ENCODE measurements at regions of chr5 and their contacts with region 1.

Region 1: DNA sequence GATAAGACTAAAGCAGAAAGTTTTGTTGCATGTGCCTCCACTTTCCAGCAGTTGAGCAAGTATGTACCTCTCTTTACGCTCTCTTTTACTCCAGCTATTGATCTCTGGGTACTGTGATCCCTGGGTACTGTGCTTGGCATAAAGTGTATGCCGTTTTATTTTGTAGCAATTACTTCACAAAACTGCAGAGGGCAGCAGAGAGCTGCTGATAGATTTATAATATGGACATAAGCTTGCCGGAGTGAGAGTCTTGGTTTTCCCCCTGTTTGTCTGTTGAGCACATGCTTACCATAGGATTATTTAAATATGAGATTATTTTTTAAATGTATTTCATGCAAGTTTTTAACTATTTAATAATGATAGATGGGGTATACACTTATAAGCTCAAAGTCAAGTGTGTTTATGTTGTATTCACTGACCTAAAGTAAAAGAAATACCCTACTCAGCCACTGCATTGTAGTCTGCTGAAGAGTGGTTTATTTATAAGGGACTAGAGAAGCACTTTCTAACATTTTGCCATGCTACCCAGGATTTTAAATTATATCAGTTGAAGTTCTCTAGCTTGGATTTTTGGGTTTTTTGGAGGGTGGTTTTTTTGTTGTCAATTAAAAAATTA is 13.0 kb downstream of the TTC1 start:
- DNase-seq: peak; percentile 89
- H3K4me3 Mint-ChIP-seq: no peak overlapping the region
- H3K27ac Mint-ChIP-seq: no peak overlapping the region
- H3K4me1 Mint-ChIP-seq: peaks cover 15% of the 10 kb centered on the region
- H3K27me3 Mint-ChIP-seq: no peaks in the 10 kb centered on the region

Region 2: DNA sequence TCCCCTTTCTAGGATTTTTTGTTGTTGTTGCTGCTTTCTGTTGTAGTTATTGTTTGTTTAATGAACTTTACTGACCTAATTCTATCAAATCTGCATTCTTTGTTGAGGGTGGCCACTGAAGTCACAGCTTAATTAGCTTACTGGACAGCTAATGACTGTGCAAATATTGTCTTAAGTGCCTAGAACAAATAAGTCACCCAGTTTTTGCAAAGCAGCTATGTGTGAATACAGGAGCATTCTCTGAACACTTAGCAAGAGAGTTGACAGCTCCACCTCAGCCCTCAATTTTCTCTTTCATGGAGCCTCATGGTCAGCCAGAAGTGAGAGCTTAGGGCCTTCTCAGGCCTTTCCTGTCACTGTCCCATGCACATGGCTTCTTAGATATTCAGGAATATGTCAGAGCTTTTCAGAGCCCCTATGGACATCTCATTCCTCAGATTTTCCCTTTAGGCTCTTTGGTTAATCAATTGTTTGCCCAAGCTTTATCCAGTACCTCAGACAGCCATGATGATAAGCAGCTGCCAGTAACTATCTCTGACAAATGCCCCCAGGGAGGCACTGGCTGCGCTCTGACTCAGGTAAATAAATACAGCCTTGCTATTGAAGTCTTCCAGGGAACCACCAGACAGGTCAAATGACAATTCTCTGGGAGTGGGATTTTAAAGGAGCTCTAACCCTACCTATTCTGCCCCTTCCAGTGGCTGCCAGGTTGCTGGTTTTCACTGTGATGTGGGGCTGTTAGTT is 450.3 kb before region 1 on chr5:
- intact Hi-C with region 1: no loop called
- DNase-seq: no peak
- H3K4me3 Mint-ChIP-seq: no peak overlapping the region
- H3K27ac Mint-ChIP-seq: no peak overlapping the region
- H3K4me1 Mint-ChIP-seq: no peaks in the 10 kb centered on the region
- H3K27me3 Mint-ChIP-seq: peaks cover 16% of the 10 kb centered on the region

Region 3: DNA sequence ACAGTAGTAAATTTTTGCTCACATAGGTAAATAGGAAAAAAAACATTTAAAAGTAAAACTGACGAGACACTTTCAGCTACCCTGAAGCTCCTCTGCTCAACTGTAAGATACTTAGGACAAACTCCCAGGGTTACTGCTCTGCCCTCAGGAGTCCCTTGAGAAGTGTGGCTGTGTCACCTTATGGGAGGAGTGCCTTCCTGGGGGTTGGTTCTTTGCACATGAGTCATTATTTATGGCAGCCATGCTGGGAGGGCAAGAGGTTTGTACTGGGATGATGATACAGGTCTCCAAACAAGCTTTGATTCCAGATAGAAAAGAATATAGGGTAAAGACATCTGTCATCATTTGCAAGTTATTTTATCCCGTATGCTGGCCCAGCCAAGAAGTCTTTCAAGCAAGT is 32.9 kb after region 1 on chr5:
- intact Hi-C with region 1: no loop called
- DNase-seq: no peak
- H3K4me3 Mint-ChIP-seq: no peak overlapping the region
- H3K27ac Mint-ChIP-seq: no peak overlapping the region
- H3K4me1 Mint-ChIP-seq: no peaks in the 10 kb centered on the region
- H3K27me3 Mint-ChIP-seq: no peaks in the 10 kb centered on the region

Region 4: GRCh38 chr5:160342403-160342941 is 320.5 kb after region 1 on chr5:
- intact Hi-C with region 1: loop called (anchors 1 kb)
- DNase-seq: no peak
- H3K4me3 Mint-ChIP-seq: no peak overlapping the region
- H3K27ac Mint-ChIP-seq: no peak overlapping the region
- H3K4me1 Mint-ChIP-seq: peaks cover 2% of the 10 kb centered on the region
- H3K27me3 Mint-ChIP-seq: no peaks in the 10 kb centered on the region

Region 5: GRCh38 chr5:160390787-160391696 is 369.1 kb after region 1 on chr5:
- intact Hi-C with region 1: loop called (anchors 5 kb)
- DNase-seq: no peak
- H3K4me3 Mint-ChIP-seq: no peak overlapping the region
- H3K27ac Mint-ChIP-seq: no peak overlapping the region
- H3K4me1 Mint-ChIP-seq: no peaks in the 10 kb centered on the region
- H3K27me3 Mint-ChIP-seq: peaks cover 5% of the 10 kb centered on the region

Measured in activated CD4-positive, alpha-beta T cell treated with anti-CD3 and anti-CD28 coated beads, Interleukin-2, amount 10 ng/mL, durations not matched to agents 24 days and 14 days (primary cell).